H1 (cell line): ENCODE measurements at regions of chr6 and their contacts with region 1.

Region 1: GRCh38 chr6:62150048-62150663 is 135.9 kb downstream of the KHDRBS2 start:
- DNase-seq: no peak
- H3K4me3 ChIP-seq: no peak overlapping the region
- H3K27ac ChIP-seq: no peak overlapping the region
- H3K4me1 ChIP-seq: no peaks in the 10 kb centered on the region
- H3K27me3 ChIP-seq: peaks cover 0 to 1% (median 0%) of the 10 kb centered on the region in 4 experiments; a peak in 1 of 7 replicates
- CTCF ChIP-seq: peak in 2 of 3 experiments; percentile 64 to 71; a peak in 3 of 4 replicates
- EP300 ChIP-seq: no peak
- POLR2A ChIP-seq: no peak
- RAD21 ChIP-seq: peak; percentile 82

Region 2: GRCh38 chr6:61809004-61809595 is 341.1 kb before region 1 on chr6:
- CTCF ChIA-PET with region 1: interaction called, 16 read pairs
- POLR2A ChIA-PET with region 1: no interaction called
- DNase-seq: no peak
- H3K4me3 ChIP-seq: no peak overlapping the region
- H3K27ac ChIP-seq: no peak overlapping the region
- H3K4me1 ChIP-seq: no peaks in the 10 kb centered on the region
- H3K27me3 ChIP-seq: no peaks in the 10 kb centered on the region
- CTCF ChIP-seq: peak in 2 of 3 experiments; percentile 37 to 46; a peak in 2 of 4 replicates
- EP300 ChIP-seq: no peak
- POLR2A ChIP-seq: no peak
- RAD21 ChIP-seq: peak; percentile 72 to 73

Region 3: GRCh38 chr6:62042429-62042828 is 107.7 kb before region 1 on chr6:
- CTCF ChIA-PET with region 1: no interaction called
- POLR2A ChIA-PET with region 1: no interaction called
- DNase-seq: no peak
- H3K4me3 ChIP-seq: no peak overlapping the region
- H3K27ac ChIP-seq: no peak overlapping the region
- H3K4me1 ChIP-seq: 0 out of 7 replicates have a peak, but pooled peaks cover 0 to 4% (median 0%) of the 10 kb centered on the region in 4 experiments
- H3K27me3 ChIP-seq: no peaks in the 10 kb centered on the region
- CTCF ChIP-seq: no peak
- EP300 ChIP-seq: no peak
- POLR2A ChIP-seq: no peak
- RAD21 ChIP-seq: no peak

Region 4: DNA sequence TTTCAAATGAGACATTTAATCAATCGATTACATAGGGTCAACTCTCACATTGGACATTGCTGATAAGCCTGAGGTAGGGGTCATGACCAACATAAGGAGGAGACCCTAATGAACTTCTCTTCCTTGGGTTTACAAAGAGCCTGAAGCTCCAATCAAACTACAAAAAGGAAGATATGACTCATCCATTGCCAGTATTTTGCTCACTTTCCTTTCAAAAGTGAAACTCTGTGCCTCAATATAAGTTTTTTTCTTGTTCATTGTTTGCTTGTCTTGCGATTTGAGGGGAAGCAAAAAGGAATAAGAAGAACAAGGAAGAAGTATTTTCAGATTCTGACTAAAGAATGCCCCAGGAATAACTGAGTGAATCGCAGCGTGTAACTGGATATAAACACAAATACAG is 174.7 kb after region 1 on chr6:
- CTCF ChIA-PET with region 1: no interaction called
- POLR2A ChIA-PET with region 1: no interaction called
- DNase-seq: no peak
- H3K4me3 ChIP-seq: no peak overlapping the region
- H3K27ac ChIP-seq: no peak overlapping the region
- H3K4me1 ChIP-seq: peaks cover 0 to 9% (median 0%) of the 10 kb centered on the region in 4 experiments; a peak in 3 of 7 replicates
- H3K27me3 ChIP-seq: no peaks in the 10 kb centered on the region
- CTCF ChIP-seq: no peak
- EP300 ChIP-seq: no peak
- POLR2A ChIP-seq: no peak
- RAD21 ChIP-seq: no peak